Aorta (tissue), 5 donors: ENCODE measurements at regions of chr13 and their contacts with region 1.

Region 1: GRCh38 chr13:49606747-49607648 is 21.3 kb upstream of the ARL11 start:
- DNase-seq: peak; percentile 93 to 94
- ATAC-seq: peak; percentile 93
- H3K4me3 ChIP-seq: peak overlapping the region in 1 of 2 donors; percentile 31
- H3K27ac ChIP-seq: no peak overlapping the region
- H3K4me1 ChIP-seq: no peaks in the 10 kb centered on the region
- H3K27me3 ChIP-seq: no peaks in the 10 kb centered on the region

Region 2: DNA sequence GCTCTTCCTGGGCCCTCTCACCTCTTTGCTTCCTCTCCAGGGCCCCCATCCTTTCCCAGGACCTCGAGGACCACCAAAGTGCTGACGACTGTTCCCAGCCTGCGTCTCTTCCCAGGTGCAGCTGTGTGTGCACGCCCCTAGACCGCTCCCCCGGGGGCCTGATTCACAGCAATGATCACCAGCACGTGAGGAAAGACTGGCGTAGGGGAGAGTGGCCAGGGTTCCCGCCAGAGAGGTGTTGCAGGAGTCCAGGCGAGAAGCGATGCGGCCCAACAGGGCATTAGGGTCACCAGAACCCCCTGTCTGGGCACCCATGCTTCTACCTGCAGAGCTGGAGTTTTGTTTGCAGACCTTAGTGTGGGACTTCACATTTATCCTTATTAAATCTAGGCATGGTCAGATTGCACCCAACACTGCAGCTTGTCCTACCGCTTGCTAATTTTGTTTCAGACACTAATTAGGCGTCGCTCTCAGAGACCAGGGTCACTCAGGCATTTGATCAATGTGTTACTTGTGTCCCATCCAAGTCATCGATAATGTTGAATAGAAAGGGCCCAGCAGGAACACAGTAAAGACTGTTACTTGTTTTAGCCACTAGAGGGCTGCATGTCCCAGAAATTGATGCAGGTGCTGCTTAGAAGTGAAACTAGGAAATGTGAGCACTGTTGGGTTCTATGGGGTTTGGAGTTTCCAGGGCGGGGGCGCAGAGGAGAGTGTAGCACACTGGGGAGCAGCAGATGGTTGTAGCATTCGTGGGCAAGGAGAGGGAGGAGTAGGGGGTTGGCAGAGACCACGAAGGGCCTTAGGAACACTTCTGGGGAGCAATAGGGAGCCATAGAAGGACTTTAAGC is 306.0 kb before region 1 on chr13:
- intact Hi-C with region 1: loop called (anchors 5 kb)
- DNase-seq: peak in 1 of 2 donors; percentile 65
- ATAC-seq: peak; percentile 85
- H3K4me3 ChIP-seq: no peak overlapping the region
- H3K27ac ChIP-seq: no peak overlapping the region
- H3K4me1 ChIP-seq: no peaks in the 10 kb centered on the region
- H3K27me3 ChIP-seq: no peaks in the 10 kb centered on the region

Region 3: GRCh38 chr13:49454388-49455006 is 152.5 kb before region 1 on chr13:
- intact Hi-C with region 1: loop called in 1 of 2 experiments (anchors 10 kb)
- DNase-seq: no peak
- ATAC-seq: no peak
- H3K4me3 ChIP-seq: no peak overlapping the region
- H3K27ac ChIP-seq: no peak overlapping the region
- H3K4me1 ChIP-seq: no peaks in the 10 kb centered on the region
- H3K27me3 ChIP-seq: no peaks in the 10 kb centered on the region

Region 4: DNA sequence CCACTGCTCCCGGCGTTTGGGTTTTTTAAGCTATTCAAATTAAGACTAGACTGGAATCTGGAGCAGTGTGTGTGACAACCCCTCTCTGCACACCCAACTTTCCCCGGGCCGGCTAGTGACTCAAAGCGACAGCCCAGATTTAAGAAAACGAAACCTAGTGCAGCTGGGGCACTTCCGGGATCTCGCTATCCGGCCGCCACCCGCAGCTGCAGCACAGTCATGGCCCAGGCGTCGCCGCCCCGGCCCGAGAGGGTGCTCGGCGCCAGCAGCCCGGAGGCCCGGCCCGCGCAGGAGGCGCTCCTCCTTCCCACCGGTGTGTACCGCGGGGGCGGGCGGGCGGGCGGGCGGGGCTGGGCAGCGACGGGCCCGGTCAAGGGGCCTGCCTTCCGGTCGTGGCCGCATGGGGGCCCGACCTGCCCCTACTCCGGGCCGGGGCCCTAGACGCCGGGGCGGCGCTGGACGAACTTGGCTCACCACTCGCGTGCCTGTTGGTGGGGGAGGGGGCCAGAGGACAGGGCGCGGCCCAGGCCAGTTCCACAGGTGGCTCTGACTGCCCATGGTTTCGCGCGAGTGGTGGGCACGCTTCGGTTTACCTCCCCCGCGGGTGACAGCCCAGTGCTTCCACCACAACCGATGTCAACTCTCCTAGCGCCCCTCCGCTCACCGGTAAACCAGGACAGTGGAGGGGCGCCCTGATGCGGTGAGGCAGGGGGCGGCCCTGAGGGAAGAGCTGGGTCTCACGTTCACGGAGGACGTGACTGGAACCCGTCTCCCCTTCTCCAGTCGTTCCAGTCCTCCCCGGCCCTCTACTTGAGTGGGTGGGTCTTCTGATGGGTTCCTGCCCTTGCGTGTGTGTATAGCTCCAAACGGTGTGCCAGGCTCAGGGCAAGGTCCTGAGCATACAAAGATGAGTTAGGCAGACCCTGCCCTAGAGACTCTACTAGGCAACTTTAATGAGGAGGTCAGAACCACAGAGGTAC is 110.9 kb before region 1 on chr13 and contains the start of gene PHF11:
- intact Hi-C with region 1: loop called in 1 of 2 experiments (anchors 5 kb)
- DNase-seq: peak; percentile 89 to 93
- ATAC-seq: peak; percentile 85
- H3K4me3 ChIP-seq: peak within 1 kb of the TSS; percentile 52 to 62
- H3K27ac ChIP-seq: peak within 1 kb of the TSS; percentile 49 to 96
- H3K4me1 ChIP-seq: no peaks in the 10 kb centered on the region
- H3K27me3 ChIP-seq: no peaks in the 10 kb centered on the region
- total RNA-seq, gene PHF11: 58.4 to 72.1 TPM

Region 5: GRCh38 chr13:49540552-49540951 is 66.4 kb before region 1 on chr13:
- intact Hi-C with region 1: loop called in 1 of 2 experiments (anchors 10 kb)
- DNase-seq: no peak
- ATAC-seq: no peak
- H3K4me3 ChIP-seq: no peak overlapping the region
- H3K27ac ChIP-seq: no peak overlapping the region
- H3K4me1 ChIP-seq: no peaks in the 10 kb centered on the region
- H3K27me3 ChIP-seq: no peaks in the 10 kb centered on the region

Region 6: DNA sequence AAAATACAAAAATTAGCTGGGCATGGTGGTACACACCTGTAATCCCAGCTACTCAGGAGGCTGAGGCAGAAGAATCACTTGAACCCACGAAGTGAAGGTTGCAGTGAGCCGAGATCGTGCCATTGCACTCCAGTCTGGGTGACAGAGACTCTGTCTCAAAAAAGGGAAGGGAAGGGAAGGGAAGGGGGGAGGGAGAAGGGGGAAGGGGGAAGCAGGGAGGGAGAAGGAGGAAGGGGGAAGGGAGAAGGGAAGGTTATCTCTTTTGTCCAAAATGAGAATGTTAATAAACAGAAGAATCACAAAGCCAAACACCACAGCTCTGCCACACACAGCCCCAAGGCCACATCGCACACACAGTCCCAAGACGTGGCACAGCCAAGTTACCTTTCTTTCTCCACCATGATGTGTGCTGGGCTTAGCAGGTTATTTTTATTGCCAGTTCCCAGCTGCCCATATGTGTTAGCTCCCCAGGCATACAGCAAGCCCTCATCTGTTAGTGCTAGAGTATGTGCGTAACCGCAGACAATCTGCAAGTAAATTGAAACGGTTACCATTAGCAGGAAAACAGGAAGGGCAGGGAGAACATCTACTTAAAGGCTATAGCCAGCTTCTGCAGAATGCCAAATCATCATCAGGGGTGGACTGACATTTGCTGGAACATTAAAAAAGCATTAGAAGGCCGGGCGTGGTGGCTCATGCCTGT is 55.9 kb before region 1 on chr13:
- intact Hi-C with region 1: loop called (anchors 5 to 10 kb)
- DNase-seq: no peak
- ATAC-seq: no peak
- H3K4me3 ChIP-seq: no peak overlapping the region
- H3K27ac ChIP-seq: no peak overlapping the region
- H3K4me1 ChIP-seq: no peaks in the 10 kb centered on the region
- H3K27me3 ChIP-seq: no peaks in the 10 kb centered on the region

Region 7: DNA sequence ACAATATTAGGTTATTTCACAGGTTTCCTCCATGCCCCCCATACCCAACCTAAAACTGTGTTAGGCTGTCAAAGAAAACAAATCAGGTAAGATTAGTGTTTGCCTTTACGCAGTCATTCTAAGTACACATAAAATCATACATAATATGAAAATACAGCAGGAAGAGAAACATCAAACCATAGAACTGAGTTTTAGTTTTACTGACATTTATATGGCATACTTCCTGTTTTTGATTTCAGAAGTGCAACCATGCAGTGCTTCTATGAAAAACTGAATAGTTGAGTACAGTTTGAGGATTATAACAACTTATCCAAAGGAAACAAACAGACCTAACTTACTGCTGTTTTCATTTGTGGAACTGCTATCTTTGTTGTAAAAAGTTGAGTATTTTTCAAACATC is 499.6 kb after region 1 on chr13:
- intact Hi-C with region 1: no loop called
- DNase-seq: no peak
- ATAC-seq: no peak
- H3K4me3 ChIP-seq: no peak overlapping the region
- H3K27ac ChIP-seq: no peak overlapping the region
- H3K4me1 ChIP-seq: no peaks in the 10 kb centered on the region
- H3K27me3 ChIP-seq: no peaks in the 10 kb centered on the region

Region 8: DNA sequence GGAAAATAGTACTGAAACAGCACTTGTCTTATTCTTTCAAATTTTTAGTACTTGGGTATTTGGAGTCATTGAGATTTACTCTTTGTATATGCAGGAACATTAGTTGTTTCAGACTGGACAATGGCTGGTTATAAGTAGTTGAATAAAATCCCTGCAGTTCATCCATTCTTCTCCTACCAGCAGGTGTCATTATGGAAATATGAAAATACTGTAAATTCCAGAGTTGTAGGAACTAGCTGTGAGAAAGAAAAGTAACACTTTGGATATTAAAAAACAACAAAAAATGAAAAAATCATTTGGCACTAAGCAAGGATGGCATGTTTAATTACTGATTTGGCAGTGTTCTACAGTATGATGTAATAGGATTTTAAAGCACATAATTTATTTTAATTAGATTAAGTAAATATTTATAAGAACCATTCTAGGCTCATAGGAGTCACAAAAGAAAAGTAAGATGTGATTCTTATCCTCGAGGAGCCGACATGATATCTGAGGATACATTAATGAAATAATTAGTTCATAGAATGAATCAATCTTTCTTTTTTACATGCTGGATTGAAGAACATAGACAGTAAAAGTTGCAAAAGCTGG is 563.5 kb after region 1 on chr13:
- intact Hi-C with region 1: no loop called
- DNase-seq: no peak
- ATAC-seq: no peak
- H3K4me3 ChIP-seq: no peak overlapping the region
- H3K27ac ChIP-seq: no peak overlapping the region
- H3K4me1 ChIP-seq: no peaks in the 10 kb centered on the region
- H3K27me3 ChIP-seq: no peaks in the 10 kb centered on the region